A549 (cell line): ENCODE measurements at regions of chr19 and their contacts with region 1.

Region 1: GRCh38 chr19:15091901-15092753 is 10.1 kb downstream of the OR1I1 start:
- DNase-seq: peak in 1 of 2 experiments; percentile 72
- ATAC-seq: peak; percentile 67 to 82; a peak in 4 of 6 replicates
- H3K4me3 ChIP-seq: no peak overlapping the region
- H3K27ac ChIP-seq: no peak overlapping the region
- H3K4me1 ChIP-seq: 0 out of 3 replicates have a peak, but pooled peaks cover 5% of the 10 kb centered on the region
- CTCF ChIP-seq: peak; percentile 64
- EP300 ChIP-seq: no peak
- POLR2A ChIP-seq: no peak
- RAD21 ChIP-seq: peak; percentile 65 to 69

Region 2: DNA sequence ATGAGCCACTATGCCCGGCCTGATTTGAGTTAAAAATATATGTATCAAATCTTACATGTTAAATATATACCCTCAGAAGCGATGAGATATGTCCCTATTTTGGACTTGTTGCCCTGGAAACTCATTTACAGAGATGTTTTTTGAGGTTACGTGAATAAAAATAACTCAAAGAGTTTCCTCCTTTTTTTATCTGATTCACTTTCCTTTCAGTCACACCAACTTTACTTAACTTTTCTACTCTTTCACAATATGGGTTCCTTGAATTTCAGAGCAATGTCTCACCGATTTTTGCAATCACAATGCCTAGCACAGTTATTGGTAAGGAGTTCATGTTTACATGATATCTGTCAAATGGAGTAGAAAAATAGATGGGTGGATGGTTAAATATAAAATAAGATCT is 148.5 kb before region 1 on chr19:
- CTCF ChIA-PET with region 1: no interaction called
- POLR2A ChIA-PET with region 1: no interaction called
- DNase-seq: no peak
- ATAC-seq: no peak
- H3K4me3 ChIP-seq: no peak overlapping the region
- H3K27ac ChIP-seq: no peak overlapping the region
- H3K4me1 ChIP-seq: no peaks in the 10 kb centered on the region
- CTCF ChIP-seq: no peak
- EP300 ChIP-seq: no peak
- POLR2A ChIP-seq: no peak
- RAD21 ChIP-seq: no peak

Region 3: DNA sequence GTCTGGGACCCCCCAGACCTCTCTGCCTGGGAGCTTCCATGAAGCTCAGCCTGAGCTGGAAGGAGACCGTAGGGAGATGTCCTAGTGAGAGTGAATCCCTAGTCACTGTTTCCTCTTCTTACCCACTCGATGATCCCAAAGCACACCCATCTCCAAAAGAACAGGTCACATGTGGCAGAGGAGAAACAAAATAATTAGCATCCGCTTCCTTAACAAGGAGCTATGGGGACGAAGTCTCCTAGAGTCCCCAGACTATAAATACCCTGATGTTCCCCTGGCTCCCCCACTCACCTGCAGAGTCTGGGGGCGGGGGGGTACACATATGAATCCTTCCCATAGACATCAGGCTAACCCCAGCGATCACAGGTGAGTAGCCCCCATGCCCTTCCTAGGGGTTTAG is 10.2 kb before region 1 on chr19 and contains the start of gene OR1I1:
- CTCF ChIA-PET with region 1: interaction called, 21 read pairs
- POLR2A ChIA-PET with region 1: no interaction called
- DNase-seq: no peak
- ATAC-seq: no peak
- H3K4me3 ChIP-seq: no peak within 1 kb of the TSS
- H3K27ac ChIP-seq: no peak within 1 kb of the TSS
- H3K4me1 ChIP-seq: no peaks in the 10 kb centered on the region
- CTCF ChIP-seq: no peak
- EP300 ChIP-seq: no peak
- POLR2A ChIP-seq: no peak
- RAD21 ChIP-seq: no peak
- polyA plus RNA-seq, gene OR1I1: not detected in 2 replicates

Region 4: GRCh38 chr19:15149737-15150136 is 57.6 kb after region 1 on chr19:
- CTCF ChIA-PET with region 1: interaction called, 13 read pairs
- POLR2A ChIA-PET with region 1: no interaction called
- DNase-seq: no peak
- ATAC-seq: no peak
- H3K4me3 ChIP-seq: no peak overlapping the region
- H3K27ac ChIP-seq: no peak overlapping the region
- H3K4me1 ChIP-seq: no peaks in the 10 kb centered on the region
- CTCF ChIP-seq: no peak
- EP300 ChIP-seq: no peak
- POLR2A ChIP-seq: no peak
- RAD21 ChIP-seq: no peak

Region 5: GRCh38 chr19:15195371-15196334 is 103.5 kb after region 1 on chr19:
- CTCF ChIA-PET with region 1: no interaction called
- POLR2A ChIA-PET with region 1: no interaction called
- DNase-seq: peak in 1 of 2 experiments; percentile 33
- ATAC-seq: peak; percentile 32 to 52; a peak in 4 of 6 replicates
- H3K4me3 ChIP-seq: peak overlapping the region; percentile 45
- H3K27ac ChIP-seq: peak overlapping the region; percentile 63 to 78
- H3K4me1 ChIP-seq: peaks cover 18% of the 10 kb centered on the region
- CTCF ChIP-seq: no peak
- EP300 ChIP-seq: no peak
- POLR2A ChIP-seq: no peak
- RAD21 ChIP-seq: no peak

Region 6: GRCh38 chr19:15426485-15427349 is 334.6 kb after region 1 on chr19:
- CTCF ChIA-PET with region 1: no interaction called
- POLR2A ChIA-PET with region 1: no interaction called
- DNase-seq: peak in 1 of 2 experiments; percentile 24
- ATAC-seq: no peak
- H3K4me3 ChIP-seq: no peak overlapping the region
- H3K27ac ChIP-seq: no peak overlapping the region
- H3K4me1 ChIP-seq: peaks cover 11% of the 10 kb centered on the region; the same call in 1 of the 3 replicates
- CTCF ChIP-seq: no peak
- EP300 ChIP-seq: no peak
- POLR2A ChIP-seq: no peak
- RAD21 ChIP-seq: no peak